Tibial artery (tissue), 4 donors: ENCODE measurements at regions of chr16 and their contacts with region 1.

Region 1: DNA sequence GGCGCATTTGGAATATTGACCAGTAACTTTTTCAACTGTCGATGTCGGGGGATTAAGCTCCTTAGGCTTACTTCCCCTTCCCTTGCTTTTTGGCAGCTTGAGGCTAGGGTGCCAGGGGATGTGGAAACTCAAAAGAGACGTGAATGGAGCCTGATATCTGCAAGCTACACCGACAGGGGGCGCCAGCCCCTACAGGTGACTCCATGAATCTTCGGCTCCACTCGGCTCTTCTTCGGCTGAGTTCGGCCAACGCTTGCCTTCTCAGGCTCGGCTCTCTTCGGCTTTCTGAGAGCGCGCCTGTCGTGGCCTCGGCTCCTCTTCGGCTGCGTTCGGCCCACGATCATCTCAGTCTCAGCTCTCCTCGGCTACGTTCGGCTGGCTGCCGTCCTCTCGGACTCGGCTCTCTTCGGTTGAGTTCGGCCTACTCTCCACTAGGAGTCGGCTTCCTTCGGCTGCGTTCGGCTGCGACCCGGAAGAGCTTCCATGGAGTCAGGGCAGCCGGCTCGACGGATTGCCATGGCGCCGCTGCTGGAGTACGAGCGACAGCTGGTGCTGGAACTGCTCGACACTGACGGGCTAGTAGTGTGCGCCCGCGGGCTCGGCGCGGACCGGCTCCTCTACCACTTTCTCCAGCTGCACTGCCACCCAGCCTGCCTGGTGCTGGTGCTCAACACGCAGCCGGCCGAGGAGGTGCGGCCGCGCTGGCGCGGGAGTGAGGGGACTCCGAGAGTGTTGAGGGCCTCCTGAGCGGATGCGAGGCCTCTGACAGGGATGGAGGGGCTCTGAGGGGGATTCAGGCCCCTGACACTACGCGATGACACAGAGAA is at the start of gene ERCC4:
- DNase-seq: peak; percentile 100
- H3K4me3 ChIP-seq: peak within 1 kb of the TSS; percentile 90 to 96
- H3K27ac ChIP-seq: peak within 1 kb of the TSS; percentile 72 to 91
- H3K4me1 ChIP-seq: peaks cover 0 to 41% (median 17%) of the 10 kb centered on the region in 4 donors
- H3K27me3 ChIP-seq: no peaks in the 10 kb centered on the region
- CTCF ChIP-seq: peak; percentile 81 to 93

Region 2: GRCh38 chr16:14193316-14193871 is 273.5 kb after region 1 on chr16:
- intact Hi-C with region 1: loop called (anchors 5 kb)
- DNase-seq: no peak
- H3K4me3 ChIP-seq: no peak overlapping the region
- H3K27ac ChIP-seq: no peak overlapping the region
- H3K4me1 ChIP-seq: peaks cover 0 to 31% (median 12%) of the 10 kb centered on the region in 4 donors
- H3K27me3 ChIP-seq: no peaks in the 10 kb centered on the region
- CTCF ChIP-seq: no peak

Region 3: DNA sequence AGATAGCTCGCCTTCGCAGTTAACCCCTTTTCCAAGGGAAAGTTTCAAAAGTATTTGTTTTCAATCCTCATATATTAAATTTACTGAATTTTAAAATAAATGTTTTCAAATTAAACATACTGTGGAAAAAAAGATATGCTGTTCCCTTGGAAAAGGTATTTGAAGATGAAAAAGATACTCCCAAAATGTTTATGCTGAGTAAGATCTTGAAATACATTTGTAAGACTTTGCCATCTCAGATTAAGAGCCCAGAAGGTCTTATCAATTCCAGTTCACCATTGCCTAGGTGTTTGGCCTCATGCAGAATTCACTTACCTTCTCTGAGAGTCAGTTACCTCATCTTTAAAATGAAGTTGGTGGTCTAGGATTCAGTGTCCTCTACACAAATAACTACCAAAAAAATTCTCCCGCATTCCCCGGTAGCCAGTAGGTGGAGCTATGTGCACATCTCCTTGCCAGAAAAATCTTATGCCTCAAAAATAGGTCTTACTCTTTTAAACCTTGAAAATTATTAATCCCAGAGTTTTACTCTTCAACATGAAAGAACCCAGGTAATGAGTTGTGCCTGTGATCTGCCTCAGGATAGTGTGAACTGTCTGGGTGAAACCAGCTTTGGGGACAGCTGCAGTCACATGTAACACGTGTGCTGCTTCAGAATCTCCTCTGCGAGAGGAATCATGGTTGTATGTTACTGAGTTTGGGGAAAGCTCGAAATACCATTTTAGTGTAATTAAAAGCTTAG is 329.6 kb after region 1 on chr16:
- intact Hi-C with region 1: loop called (anchors 10 kb)
- DNase-seq: peak in 1 of 2 donors; percentile 48
- H3K4me3 ChIP-seq: no peak overlapping the region
- H3K27ac ChIP-seq: no peak overlapping the region
- H3K4me1 ChIP-seq: no peaks in the 10 kb centered on the region
- H3K27me3 ChIP-seq: no peaks in the 10 kb centered on the region
- CTCF ChIP-seq: peak; percentile 71 to 79